Breast epithelium (tissue), 4 donors: ENCODE measurements at regions of chr15 and their contacts with region 1.

Region 1: GRCh38 chr15:92438471-92438870 is 44.8 kb downstream of the ST8SIA2 start:
- DNase-seq: no peak
- H3K4me3 ChIP-seq: no peak overlapping the region
- H3K27ac ChIP-seq: no peak overlapping the region
- H3K4me1 ChIP-seq: no peaks in the 10 kb centered on the region
- H3K27me3 ChIP-seq: peaks cover 0 to 4% of the 10 kb centered on the region in 2 donors
- CTCF ChIP-seq: no peak
- POLR2A ChIP-seq: no peak

Region 2: DNA sequence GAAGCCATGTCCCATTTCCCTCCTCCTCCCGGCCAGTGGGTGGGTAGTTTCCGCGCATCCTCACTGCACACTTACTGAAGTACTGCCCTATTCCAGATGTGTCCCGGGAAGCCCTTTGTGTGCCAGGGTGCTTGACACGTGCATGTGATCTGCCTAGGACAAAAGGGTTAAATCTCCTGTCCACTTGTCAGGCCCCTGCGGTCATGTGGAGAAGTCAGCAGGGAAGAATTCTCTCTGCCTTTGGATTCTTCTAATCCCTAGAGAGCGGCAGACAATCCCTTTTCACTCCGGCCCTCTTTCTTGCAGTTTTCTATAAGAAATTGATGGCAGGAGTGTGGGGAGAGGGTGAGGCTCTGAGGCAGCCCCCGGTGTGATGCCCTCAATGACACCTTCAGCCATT is 25.0 kb before region 1 on chr15:
- intact Hi-C with region 1: loop called (anchors 1 kb)
- DNase-seq: no peak
- H3K4me3 ChIP-seq: no peak overlapping the region
- H3K27ac ChIP-seq: no peak overlapping the region
- H3K4me1 ChIP-seq: no peaks in the 10 kb centered on the region
- H3K27me3 ChIP-seq: no peaks in the 10 kb centered on the region
- CTCF ChIP-seq: no peak
- POLR2A ChIP-seq: no peak